Motor neuron (in vitro differentiated cells): ENCODE measurements at regions of chr5 and their contacts with region 1.

Region 1: DNA sequence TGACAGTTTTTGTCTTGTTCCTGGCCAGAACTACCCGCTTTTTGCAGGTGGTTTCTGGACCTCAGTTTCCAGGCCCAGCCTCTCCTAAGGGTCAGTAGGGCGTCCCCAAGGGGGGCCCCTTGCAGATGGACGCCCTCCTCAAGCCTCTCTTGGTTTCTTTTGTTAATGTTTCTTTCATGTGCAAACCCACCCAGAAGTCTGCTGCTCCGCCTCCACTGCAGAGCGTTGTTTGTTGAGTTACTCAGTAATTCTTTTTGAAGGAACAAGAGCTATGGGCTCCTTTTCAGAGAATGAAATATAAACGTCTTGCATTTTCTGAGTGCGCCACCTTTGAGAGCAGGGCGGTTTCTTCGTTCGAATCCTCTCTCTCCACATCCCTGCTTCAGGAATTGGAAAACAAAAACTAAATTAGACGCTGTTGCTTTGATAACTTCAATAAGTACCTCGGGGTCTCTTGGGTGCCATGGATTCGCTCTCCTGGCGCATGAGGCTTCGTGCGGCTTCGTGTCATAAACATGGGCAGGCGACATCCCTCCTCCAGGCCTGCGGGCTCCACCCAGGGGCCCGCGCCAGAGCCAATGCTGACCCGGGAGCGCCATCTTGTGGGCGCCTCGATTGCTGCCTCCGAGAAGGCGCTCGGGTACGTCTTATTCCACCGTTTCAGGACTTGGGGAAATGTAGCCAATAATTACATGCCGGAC is 38.3 kb upstream of the CKMT2 start:
- ATAC-seq: peak; percentile 98 to 100 (median 100)
- H3K4me3 ChIP-seq: no peak overlapping the region
- H3K27ac ChIP-seq: no peak overlapping the region
- H3K4me1 ChIP-seq: peaks cover 0 to 6% of the 10 kb centered on the region in 2 donors

Region 2: GRCh38 chr5:80686757-80687156 is 508.0 kb before region 1 on chr5:
- in situ Hi-C with region 1: loop called in 3 of 9 experiments (anchors 25 kb)
- ATAC-seq: no peak
- H3K4me3 ChIP-seq: no peak overlapping the region
- H3K27ac ChIP-seq: no peak overlapping the region
- H3K4me1 ChIP-seq: no peaks in the 10 kb centered on the region

Region 3: GRCh38 chr5:80711938-80712337 is 482.8 kb before region 1 on chr5:
- in situ Hi-C with region 1: loop called in 2 of 9 experiments (anchors 25 kb)
- ATAC-seq: peak in 6 of 8 experiments; percentile 40 to 92 (median 68)
- H3K4me3 ChIP-seq: no peak overlapping the region
- H3K27ac ChIP-seq: no peak overlapping the region
- H3K4me1 ChIP-seq: no peaks in the 10 kb centered on the region

Region 4: DNA sequence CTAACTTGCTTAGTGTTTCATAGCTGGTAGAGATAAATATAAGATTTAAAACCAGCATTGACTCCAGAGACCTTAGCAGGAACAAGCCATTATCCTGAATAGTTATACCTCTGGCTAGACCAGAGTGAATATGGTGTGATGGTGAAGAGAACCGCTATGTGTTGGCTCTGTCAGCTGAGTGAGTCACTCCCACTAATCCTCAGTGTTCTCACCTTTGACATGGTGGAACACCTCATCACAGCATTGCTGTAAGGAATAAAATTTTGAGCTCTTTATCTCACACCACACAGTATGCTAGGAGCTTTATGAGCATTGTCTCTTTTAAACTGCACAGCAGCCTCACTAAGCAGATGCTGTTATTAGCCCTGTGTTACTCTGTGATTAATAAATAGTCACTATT is 449.3 kb before region 1 on chr5:
- in situ Hi-C with region 1: loop called in 1 of 9 experiments (anchors 25 kb)
- ATAC-seq: peak in 3 of 8 experiments; percentile 61 to 74 (median 63)
- H3K4me3 ChIP-seq: no peak overlapping the region
- H3K27ac ChIP-seq: no peak overlapping the region
- H3K4me1 ChIP-seq: no peaks in the 10 kb centered on the region